MCF 10A (cell line): ENCODE measurements at regions of chr12 and their contacts with region 1.

Region 1: DNA sequence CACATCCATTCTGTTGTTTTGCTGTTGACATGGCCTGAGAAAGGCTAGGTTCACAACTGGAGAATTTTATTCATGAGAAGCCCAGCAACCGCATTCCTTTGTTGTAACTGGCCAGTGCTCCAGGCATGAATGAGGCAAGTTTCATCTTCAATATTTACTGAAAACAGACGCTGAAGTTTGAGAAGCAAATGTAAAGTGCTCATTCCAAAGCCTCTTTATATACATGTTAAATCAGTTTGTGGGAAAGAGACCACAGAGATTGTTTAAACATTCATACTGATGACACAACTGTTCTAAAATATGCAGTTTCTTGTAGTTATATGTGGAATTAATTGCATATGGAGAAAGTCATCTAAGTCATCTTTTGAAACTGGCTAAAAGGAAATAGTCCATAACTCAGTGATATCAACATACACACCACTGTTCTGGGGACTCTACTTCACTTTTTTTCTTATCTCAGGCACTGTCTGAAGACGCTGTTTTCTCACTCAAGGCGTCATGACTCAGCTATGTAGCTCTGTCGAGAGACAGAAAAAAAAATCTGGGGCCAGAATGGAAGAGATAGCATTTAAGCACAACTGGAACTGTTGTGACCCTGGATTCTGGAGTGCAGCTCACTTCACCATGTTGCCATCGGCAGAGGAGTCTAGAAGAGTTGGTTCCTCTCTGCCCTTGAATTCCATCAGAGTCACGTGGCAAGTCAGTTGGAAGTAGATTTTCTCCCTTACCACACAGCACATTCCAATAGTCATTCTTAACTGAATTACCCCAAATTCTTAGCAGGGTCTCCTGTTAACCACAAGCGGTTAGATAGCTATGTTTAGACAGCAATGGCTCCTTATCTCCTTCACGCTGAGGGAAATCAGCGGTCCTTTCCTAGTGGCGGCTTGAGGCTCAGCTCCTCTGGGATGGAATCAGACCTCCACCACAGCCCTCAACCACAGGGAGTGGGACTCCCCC is 258.4 kb upstream of the HMGA2 start:
- DNase-seq: peak; percentile 54
- H3K4me3 Mint-ChIP-seq: no peak overlapping the region
- H3K27ac Mint-ChIP-seq: peak overlapping the region; percentile 75
- H3K4me1 Mint-ChIP-seq: peaks cover 30% of the 10 kb centered on the region
- H3K27me3 Mint-ChIP-seq: no peaks in the 10 kb centered on the region
- CTCF ChIP-seq: no peak

Region 2: GRCh38 chr12:65392491-65392890 is 173.4 kb before region 1 on chr12:
- CTCF ChIA-PET with region 1: no interaction called
- POLR2A ChIA-PET with region 1: no interaction called
- intact Hi-C with region 1: no loop called
- DNase-seq: no peak
- H3K4me3 Mint-ChIP-seq: no peak overlapping the region
- H3K27ac Mint-ChIP-seq: no peak overlapping the region
- H3K4me1 Mint-ChIP-seq: no peaks in the 10 kb centered on the region
- H3K27me3 Mint-ChIP-seq: no peaks in the 10 kb centered on the region
- CTCF ChIP-seq: no peak

Region 3: DNA sequence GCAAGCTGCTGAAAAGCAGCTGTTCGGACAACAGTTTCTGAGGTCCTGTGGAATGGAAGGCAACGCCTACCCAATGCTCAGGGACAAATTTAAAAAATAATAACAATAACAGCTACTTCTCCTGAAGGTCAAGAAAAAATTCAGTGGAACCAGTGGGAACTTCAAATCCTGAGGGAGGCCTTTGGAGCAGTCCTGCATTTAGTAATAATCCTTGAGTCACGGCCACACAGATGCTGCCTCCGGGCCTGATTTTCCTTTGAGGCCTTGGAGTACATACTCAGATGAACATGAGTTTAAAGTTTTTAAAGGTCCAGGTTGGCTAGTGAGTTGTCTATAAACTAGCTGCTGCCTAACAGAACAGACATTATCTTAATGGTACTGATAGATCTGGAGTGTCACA is 19.4 kb before region 1 on chr12:
- CTCF ChIA-PET with region 1: no interaction called
- POLR2A ChIA-PET with region 1: no interaction called
- intact Hi-C with region 1: no loop called
- DNase-seq: no peak
- H3K4me3 Mint-ChIP-seq: no peak overlapping the region
- H3K27ac Mint-ChIP-seq: no peak overlapping the region
- H3K4me1 Mint-ChIP-seq: no peaks in the 10 kb centered on the region
- H3K27me3 Mint-ChIP-seq: no peaks in the 10 kb centered on the region
- CTCF ChIP-seq: no peak

Region 4: DNA sequence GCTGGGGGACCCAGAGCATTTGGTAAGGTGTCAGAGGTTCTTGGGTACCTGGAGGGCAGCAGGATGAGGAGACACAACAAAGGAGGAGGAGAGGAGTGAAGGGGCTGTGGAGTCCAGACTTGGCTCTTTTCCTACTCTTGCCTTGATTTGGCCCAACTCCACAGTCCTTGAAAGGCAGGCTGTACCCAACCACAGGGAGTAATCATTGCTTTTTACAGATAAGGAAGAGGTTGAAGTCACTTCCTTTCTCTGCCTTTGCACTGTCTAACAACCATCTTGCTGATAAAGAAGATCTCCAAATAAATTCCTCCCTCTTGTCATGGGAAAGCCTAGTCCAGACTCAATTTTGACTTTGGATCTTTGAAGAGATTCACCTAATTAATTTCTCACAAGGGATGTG is 31.6 kb after region 1 on chr12:
- CTCF ChIA-PET with region 1: interaction called, 21 read pairs
- POLR2A ChIA-PET with region 1: interaction called, 11 read pairs
- intact Hi-C with region 1: no loop called
- DNase-seq: peak; percentile 14
- H3K4me3 Mint-ChIP-seq: no peak overlapping the region
- H3K27ac Mint-ChIP-seq: peak overlapping the region; percentile 90
- H3K4me1 Mint-ChIP-seq: peaks cover 56% of the 10 kb centered on the region
- H3K27me3 Mint-ChIP-seq: no peaks in the 10 kb centered on the region
- CTCF ChIP-seq: no peak